HEK293 (cell line): ENCODE measurements at regions of chr11 and their contacts with region 1.

Region 1: DNA sequence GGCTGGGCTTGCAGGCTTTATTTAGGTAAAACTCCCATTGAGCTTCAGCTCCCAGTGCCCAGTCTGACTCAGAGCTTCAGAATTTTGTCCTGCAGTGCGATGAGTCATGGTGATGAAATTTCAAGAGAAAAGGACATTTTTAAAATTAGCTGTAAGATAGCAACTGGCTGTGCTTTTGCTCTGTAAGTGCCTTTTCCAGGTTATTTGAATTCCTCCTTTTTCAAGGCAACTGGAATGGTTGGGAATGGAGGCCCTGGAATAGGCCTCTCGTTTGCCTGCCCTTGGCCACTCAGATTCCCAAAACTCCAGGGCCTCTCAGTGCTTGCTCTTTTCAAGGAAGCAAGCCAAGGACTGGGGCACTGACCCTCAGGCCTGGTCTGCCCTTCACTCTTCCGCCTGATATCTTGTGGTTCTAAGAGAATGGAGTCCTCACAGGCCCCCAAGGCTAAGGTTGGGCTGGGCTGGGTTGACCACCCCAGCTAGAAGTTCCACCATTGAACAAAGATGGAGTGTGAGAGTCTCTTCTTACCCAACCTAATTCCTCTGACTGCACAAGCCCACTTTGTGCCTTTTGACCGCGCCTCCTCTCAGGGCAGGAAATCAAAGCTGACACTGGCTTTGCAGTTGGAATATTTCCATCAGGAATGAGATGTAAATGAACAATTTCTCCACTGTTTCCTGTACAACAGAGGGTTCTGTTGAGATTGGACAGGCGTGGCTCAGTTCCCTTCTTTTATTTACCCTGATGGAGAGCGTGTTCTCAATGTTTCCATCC is 59.4 kb upstream of the PRSS23 start:
- H3K4me3 ChIP-seq: no peak overlapping the region
- H3K27ac ChIP-seq: peak overlapping the region; percentile 60
- H3K4me1 ChIP-seq: 0 out of 2 replicates have a peak, but pooled peaks cover 3% of the 10 kb centered on the region
- CTCF ChIP-seq: no peak

Region 2: DNA sequence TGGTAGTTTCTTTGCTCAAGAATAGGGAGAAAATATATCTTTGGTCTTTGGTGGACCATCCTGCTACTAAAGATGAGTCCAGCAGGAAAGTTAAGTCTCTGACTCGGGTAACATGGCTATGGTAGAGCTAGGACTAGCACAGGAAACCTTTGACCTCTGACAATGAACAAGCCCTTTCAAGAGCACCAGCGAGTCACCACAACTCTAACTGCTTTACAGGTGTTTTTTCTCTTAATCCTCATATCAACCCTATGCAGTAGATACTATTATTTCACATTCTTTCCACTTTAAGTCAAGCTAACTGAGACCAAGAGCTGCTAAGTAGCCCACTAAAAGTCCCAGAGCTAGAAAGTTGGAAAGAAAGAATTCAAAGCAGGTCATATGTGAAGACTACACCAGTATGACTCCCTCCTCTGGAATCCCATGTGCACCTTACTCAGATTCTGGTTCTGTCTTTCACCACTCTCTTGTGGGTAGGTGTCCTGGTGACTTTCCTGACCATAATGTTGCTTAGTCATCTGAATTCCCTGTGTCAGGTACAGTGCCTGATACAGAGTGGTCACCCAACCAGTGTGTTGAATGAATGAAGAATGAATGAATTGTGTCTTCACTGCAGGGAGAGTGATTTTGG is 14.7 kb before region 1 on chr11:
- CTCF ChIA-PET with region 1: no interaction called
- POLR2A ChIA-PET with region 1: no interaction called
- H3K4me3 ChIP-seq: no peak overlapping the region
- H3K27ac ChIP-seq: no peak overlapping the region
- H3K4me1 ChIP-seq: no peaks in the 10 kb centered on the region
- CTCF ChIP-seq: no peak

Region 3: GRCh38 chr11:86802601-86803051 is 61.7 kb after region 1 on chr11:
- CTCF ChIA-PET with region 1: no interaction called
- POLR2A ChIA-PET with region 1: interaction called, 11 read pairs
- H3K4me3 ChIP-seq: peak overlapping the region; percentile 12; the same call in 1 of the 2 replicates
- H3K27ac ChIP-seq: no peak overlapping the region
- H3K4me1 ChIP-seq: peaks cover 4% of the 10 kb centered on the region
- CTCF ChIP-seq: no peak